ENCODE measurements at regions of chr5 and their contacts with region 1.

Region 1: DNA sequence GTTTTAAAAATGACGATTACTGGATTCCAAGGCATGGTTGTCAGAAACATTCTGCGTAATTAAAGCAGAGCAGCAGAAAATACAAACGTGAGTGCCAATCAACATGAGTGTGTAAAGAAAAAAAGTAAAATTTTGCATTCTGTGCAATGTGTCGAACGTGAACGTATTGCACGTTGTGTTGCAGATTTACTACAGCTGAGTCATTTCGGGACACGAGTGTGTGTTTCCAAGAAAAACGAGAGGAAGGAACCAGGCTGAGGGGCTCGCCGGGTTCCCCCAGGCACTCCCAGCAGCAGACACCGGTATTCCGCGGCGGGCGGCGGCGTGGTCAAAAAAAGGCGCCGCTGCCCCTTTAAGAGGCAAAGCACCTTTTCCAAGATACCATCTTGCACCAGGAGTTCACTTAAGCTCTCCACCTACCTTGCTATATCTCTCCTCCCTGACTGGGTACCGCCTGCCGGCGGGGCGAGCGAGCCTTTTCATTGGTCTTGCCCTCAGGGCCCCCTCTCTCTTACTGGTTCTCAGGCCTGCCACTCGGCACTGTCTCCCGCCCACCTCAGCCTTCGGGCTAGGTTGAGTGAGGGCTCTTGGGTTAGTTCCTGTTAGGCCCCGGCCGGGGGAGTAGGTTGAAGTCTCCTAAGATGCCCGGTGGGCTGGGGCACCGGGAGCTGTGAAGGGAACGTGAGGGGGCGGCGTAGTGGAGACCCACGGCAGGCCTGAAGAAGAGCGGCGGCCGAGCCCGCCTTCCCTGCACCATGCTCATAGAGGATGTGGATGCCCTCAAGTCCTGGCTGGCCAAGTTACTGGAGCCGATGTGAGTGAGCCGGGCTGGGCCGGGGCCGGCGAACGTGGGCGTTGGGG is at the start of gene RBM27:
- DNase-seq: peak; percentile 98
- H3K4me3 Mint-ChIP-seq: no peak within 1 kb of the TSS
- H3K27ac Mint-ChIP-seq: no peak within 1 kb of the TSS
- H3K4me1 Mint-ChIP-seq: peaks cover 21% of the 10 kb centered on the region
- H3K27me3 Mint-ChIP-seq: no peaks in the 10 kb centered on the region
- total RNA-seq, gene RBM27: 19.3 to 21.8 TPM

Region 2: GRCh38 chr5:145834917-145835847 is 368.1 kb before region 1 on chr5 and contains the start of gene PRELID2:
- CTCF ChIA-PET with region 1: no interaction called
- POLR2A ChIA-PET with region 1: no interaction called
- intact Hi-C with region 1: loop called (anchors 10 kb)
- DNase-seq: peak; percentile 76
- H3K4me3 Mint-ChIP-seq: peak within 1 kb of the TSS; percentile 53
- H3K27ac Mint-ChIP-seq: no peak within 1 kb of the TSS
- H3K4me1 Mint-ChIP-seq: peaks cover 11% of the 10 kb centered on the region
- H3K27me3 Mint-ChIP-seq: peaks cover 7% of the 10 kb centered on the region
- total RNA-seq, gene PRELID2: 3.8 to 4.3 TPM

Region 3: GRCh38 chr5:145946112-145946861 is 257.0 kb before region 1 on chr5:
- CTCF ChIA-PET with region 1: no interaction called
- POLR2A ChIA-PET with region 1: interaction called, 3 read pairs
- intact Hi-C with region 1: loop called (anchors 2 kb)
- DNase-seq: no peak
- H3K4me3 Mint-ChIP-seq: peak overlapping the region; percentile 2
- H3K27ac Mint-ChIP-seq: no peak overlapping the region
- H3K4me1 Mint-ChIP-seq: peaks cover 27% of the 10 kb centered on the region
- H3K27me3 Mint-ChIP-seq: peaks cover 26% of the 10 kb centered on the region

Region 4: GRCh38 chr5:146238973-146239372 is 35.7 kb after region 1 on chr5:
- CTCF ChIA-PET with region 1: interaction called, 4 read pairs
- POLR2A ChIA-PET with region 1: no interaction called
- intact Hi-C with region 1: loop called (anchors 1 kb)
- DNase-seq: no peak
- H3K4me3 Mint-ChIP-seq: no peak overlapping the region
- H3K27ac Mint-ChIP-seq: no peak overlapping the region
- H3K4me1 Mint-ChIP-seq: peaks cover 8% of the 10 kb centered on the region
- H3K27me3 Mint-ChIP-seq: no peaks in the 10 kb centered on the region

Region 5: DNA sequence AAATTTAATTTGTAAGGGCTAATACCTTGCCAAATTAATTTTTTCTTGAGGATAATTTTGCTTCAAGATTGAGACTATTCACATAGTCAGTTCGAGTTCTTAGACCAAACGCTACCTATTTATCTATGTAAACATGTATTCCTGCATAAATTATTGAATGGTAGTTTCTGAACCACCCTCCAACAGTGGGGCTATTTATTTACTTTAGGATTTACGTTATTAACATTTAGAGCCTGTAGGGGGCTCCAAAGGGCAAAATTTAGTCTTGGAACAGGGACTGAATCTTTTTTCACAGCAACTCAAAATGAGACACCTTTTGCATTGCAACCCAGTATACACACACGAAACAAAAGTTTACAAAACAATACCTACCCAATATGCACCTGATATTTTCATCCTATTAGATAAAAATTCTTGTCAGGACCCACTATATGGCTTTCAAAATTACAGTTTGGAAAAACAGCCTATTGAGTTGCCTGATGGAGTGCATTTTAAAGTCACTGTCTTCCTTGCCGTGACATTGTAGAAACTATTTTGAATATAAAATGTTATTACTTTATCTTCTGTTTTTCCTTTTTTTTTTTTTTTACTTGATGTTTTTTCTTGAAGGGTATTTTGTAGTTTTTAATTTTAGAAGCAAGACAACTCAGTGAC is 88.3 kb after region 1 on chr5:
- CTCF ChIA-PET with region 1: no interaction called
- POLR2A ChIA-PET with region 1: no interaction called
- intact Hi-C with region 1: no loop called
- DNase-seq: no peak
- H3K4me3 Mint-ChIP-seq: no peak overlapping the region
- H3K27ac Mint-ChIP-seq: no peak overlapping the region
- H3K4me1 Mint-ChIP-seq: no peaks in the 10 kb centered on the region
- H3K27me3 Mint-ChIP-seq: no peaks in the 10 kb centered on the region

Region 6: DNA sequence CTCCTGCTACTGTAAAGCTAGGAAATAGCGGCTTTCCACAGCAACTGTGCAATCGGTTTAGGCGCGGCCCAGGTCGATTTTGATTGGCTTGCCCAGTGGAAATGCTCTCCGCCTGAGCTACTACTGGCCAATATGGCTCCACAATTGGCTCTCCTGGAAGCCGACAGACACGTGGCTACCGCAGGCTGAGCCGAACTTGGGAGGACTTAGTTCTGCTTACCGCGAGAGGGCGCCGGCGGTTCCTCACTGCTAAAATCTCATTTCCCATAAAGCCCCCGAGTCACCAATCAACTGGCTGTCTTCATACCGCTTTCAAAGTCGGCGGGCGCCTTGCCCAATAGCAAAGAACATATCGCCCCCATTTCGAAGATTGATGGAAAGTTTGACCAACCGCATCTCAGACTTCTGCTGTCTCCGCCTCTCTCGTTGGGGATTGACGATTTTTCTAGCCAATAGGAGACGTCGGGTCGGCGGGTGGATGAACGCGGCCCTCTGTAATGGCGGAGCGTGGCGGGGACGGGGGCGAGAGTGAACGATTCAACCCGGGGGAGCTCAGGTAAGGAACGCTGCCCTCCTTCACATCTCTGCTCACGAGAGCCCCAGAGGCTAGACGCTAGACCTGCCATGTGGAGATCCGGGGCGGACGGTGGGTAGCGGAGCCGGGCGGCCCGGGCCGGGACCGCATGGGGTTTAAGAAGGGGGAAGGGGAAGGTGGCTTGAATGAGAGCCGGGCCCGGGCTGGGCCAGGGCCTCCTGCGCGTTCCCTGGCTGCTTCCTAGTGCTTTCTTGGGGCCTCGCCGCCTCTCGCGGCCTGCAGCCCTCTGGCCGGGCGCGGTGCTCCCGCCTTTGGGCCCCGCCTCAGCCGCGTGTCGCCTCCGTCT is 243.9 kb after region 1 on chr5 and contains the start of gene TCERG1:
- CTCF ChIA-PET with region 1: no interaction called
- POLR2A ChIA-PET with region 1: no interaction called
- intact Hi-C with region 1: loop called (anchors 1 kb)
- DNase-seq: peak; percentile 99
- H3K4me3 Mint-ChIP-seq: peak within 1 kb of the TSS; percentile 97
- H3K27ac Mint-ChIP-seq: peak within 1 kb of the TSS; percentile 98
- H3K4me1 Mint-ChIP-seq: peaks cover 37% of the 10 kb centered on the region
- H3K27me3 Mint-ChIP-seq: no peaks in the 10 kb centered on the region
- total RNA-seq, gene TCERG1: 93.3 to 99.4 TPM

Measured in activated CD4-positive, alpha-beta memory T cell treated with anti-CD3 and anti-CD28 coated beads for 36 hours (primary cell).